ENCODE measurements at regions of chr2 and their contacts with region 1.

Region 1: GRCh38 chr2:197113275-197113711 is 186.8 kb upstream of the PGAP1 start:
- DNase-seq: peak; percentile 45
- ATAC-seq: peak; percentile 56; the same call in 1 of the 2 replicates
- H3K4me3 ChIP-seq: no peak overlapping the region
- H3K27ac ChIP-seq: no peak overlapping the region
- H3K4me1 ChIP-seq: peaks cover 4% of the 10 kb centered on the region
- H3K27me3 ChIP-seq: no peaks in the 10 kb centered on the region
- CTCF ChIP-seq: peak; percentile 68
- POLR2A ChIP-seq: no peak
- RAD21 ChIP-seq: peak; percentile 67

Region 2: GRCh38 chr2:196798980-196799379 is 314.3 kb before region 1 on chr2:
- CTCF ChIA-PET with region 1: no interaction called
- POLR2A ChIA-PET with region 1: no interaction called
- dilution Hi-C with region 1: no loop called
- in situ Hi-C with region 1: no loop called
- intact Hi-C with region 1: loop called (anchors 10 kb)
- DNase-seq: no peak
- ATAC-seq: peak; percentile 8; the same call in 1 of the 2 replicates
- H3K4me3 ChIP-seq: peak overlapping the region; percentile 95
- H3K27ac ChIP-seq: peak overlapping the region; percentile 77
- H3K4me1 ChIP-seq: no peaks in the 10 kb centered on the region
- H3K27me3 ChIP-seq: no peaks in the 10 kb centered on the region
- CTCF ChIP-seq: no peak
- POLR2A ChIP-seq: no peak
- RAD21 ChIP-seq: no peak

Region 3: GRCh38 chr2:196926562-196927375 is 186.5 kb before region 1 on chr2 and contains the start of gene PGAP1:
- CTCF ChIA-PET with region 1: no interaction called
- POLR2A ChIA-PET with region 1: no interaction called
- dilution Hi-C with region 1: no loop called
- in situ Hi-C with region 1: no loop called
- intact Hi-C with region 1: loop called (anchors 5 kb)
- DNase-seq: peak; percentile 88
- ATAC-seq: peak; percentile 91
- H3K4me3 ChIP-seq: peak within 1 kb of the TSS; percentile 80
- H3K27ac ChIP-seq: peak within 1 kb of the TSS; percentile 92
- H3K4me1 ChIP-seq: no peaks in the 10 kb centered on the region; the same call in 1 of the 2 replicates
- H3K27me3 ChIP-seq: no peaks in the 10 kb centered on the region; the same call in 1 of the 2 replicates
- CTCF ChIP-seq: no peak
- POLR2A ChIP-seq: peak; percentile 74
- RAD21 ChIP-seq: no peak; the same call in 1 of the 2 replicates
- total RNA-seq, gene PGAP1: 5.7 and 6.7 TPM in 2 replicates

Region 4: GRCh38 chr2:197137231-197137630 is 23.9 kb after region 1 on chr2:
- CTCF ChIA-PET with region 1: interaction called, 10 read pairs
- POLR2A ChIA-PET with region 1: no interaction called
- dilution Hi-C with region 1: no loop called
- in situ Hi-C with region 1: no loop called
- intact Hi-C with region 1: no loop called
- DNase-seq: peak; percentile 77
- ATAC-seq: peak; percentile 88
- H3K4me3 ChIP-seq: no peak overlapping the region
- H3K27ac ChIP-seq: no peak overlapping the region
- H3K4me1 ChIP-seq: peaks cover 9% of the 10 kb centered on the region
- H3K27me3 ChIP-seq: no peaks in the 10 kb centered on the region
- CTCF ChIP-seq: no peak
- POLR2A ChIP-seq: no peak
- RAD21 ChIP-seq: no peak

Region 5: DNA sequence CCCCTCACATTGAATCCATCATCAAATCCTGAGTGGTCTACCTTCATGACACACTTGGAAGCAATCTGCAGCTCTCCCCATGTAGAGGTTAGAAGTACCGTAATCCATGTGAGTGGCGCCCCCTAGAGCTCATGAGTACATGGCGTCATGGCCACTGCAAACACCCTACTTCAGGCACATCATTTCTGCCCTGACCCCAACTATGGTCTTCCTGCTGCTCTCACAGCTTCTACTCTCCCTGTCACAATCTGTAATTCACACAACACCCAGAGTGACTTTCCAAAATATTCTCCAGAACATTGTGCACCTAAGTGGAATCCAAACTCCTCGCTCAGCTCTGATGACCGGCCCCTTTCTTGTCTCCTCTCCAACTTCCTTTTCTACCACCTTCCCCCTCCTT is 55.4 kb after region 1 on chr2:
- CTCF ChIA-PET with region 1: interaction called, 5 read pairs
- POLR2A ChIA-PET with region 1: no interaction called
- dilution Hi-C with region 1: no loop called
- in situ Hi-C with region 1: no loop called
- intact Hi-C with region 1: loop called (anchors 1 kb)
- DNase-seq: peak; percentile 51
- ATAC-seq: peak; percentile 79
- H3K4me3 ChIP-seq: no peak overlapping the region
- H3K27ac ChIP-seq: no peak overlapping the region
- H3K4me1 ChIP-seq: no peaks in the 10 kb centered on the region
- H3K27me3 ChIP-seq: no peaks in the 10 kb centered on the region
- CTCF ChIP-seq: peak; percentile 64
- POLR2A ChIP-seq: no peak
- RAD21 ChIP-seq: peak; percentile 69

Region 6: GRCh38 chr2:197310271-197310985 is 197.1 kb after region 1 on chr2 and contains the start of gene ANKRD44:
- CTCF ChIA-PET with region 1: interaction called, 8 read pairs
- POLR2A ChIA-PET with region 1: no interaction called
- dilution Hi-C with region 1: no loop called
- in situ Hi-C with region 1: loop called (anchors 5 kb)
- intact Hi-C with region 1: loop called (anchors 1 kb)
- DNase-seq: peak; percentile 80
- ATAC-seq: peak; percentile 94
- H3K4me3 ChIP-seq: peak within 1 kb of the TSS; percentile 98
- H3K27ac ChIP-seq: peak within 1 kb of the TSS; percentile 70
- H3K4me1 ChIP-seq: peaks cover 8% of the 10 kb centered on the region
- H3K27me3 ChIP-seq: no peaks in the 10 kb centered on the region; the same call in 1 of the 2 replicates
- CTCF ChIP-seq: peak; percentile 61
- POLR2A ChIP-seq: no peak
- RAD21 ChIP-seq: peak; percentile 73
- total RNA-seq, gene ANKRD44: 11.7 and 15.6 TPM in 2 replicates

Region 7: GRCh38 chr2:197383823-197384222 is 270.5 kb after region 1 on chr2:
- CTCF ChIA-PET with region 1: interaction called, 5 read pairs
- POLR2A ChIA-PET with region 1: no interaction called
- dilution Hi-C with region 1: no loop called
- in situ Hi-C with region 1: loop called (anchors 5 kb)
- intact Hi-C with region 1: no loop called
- DNase-seq: no peak
- ATAC-seq: no peak
- H3K4me3 ChIP-seq: no peak overlapping the region
- H3K27ac ChIP-seq: no peak overlapping the region
- H3K4me1 ChIP-seq: peaks cover 3% of the 10 kb centered on the region
- H3K27me3 ChIP-seq: no peaks in the 10 kb centered on the region; the same call in 1 of the 2 replicates
- CTCF ChIP-seq: no peak
- POLR2A ChIP-seq: no peak
- RAD21 ChIP-seq: no peak

Measured in IMR-90 (cell line).